ENCODE measurements at regions of chr2 and their contacts with region 1.

Region 1: DNA sequence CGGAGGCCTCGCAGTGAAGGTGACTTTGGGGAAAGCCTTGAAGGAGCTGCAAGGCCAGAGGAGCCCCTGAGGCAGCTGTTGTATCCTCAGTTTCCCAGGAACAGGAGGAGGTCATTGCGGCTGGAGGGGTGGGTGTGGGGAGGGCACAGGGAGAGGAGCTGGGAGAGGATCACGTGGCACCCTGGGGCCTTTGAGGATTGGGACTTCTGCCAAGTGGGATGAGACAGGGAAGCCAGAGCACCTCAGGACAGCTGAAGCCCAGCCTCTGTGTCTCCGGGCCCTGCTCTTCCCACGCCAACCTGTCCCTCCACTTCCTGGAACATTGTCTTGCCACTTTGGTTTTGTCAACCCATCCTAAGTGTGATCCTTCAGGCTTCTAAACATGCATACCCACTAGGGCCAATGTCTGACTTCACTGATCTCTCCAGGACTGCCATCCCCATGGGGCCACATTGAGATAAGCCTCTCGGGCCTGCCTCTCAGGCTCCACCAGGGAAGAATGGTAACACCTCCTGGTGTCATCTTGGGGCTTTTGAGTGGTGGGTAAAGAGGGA is 19.3 kb upstream of the RRM2 start:
- DNase-seq: no peak
- ATAC-seq: no peak
- H3K4me3 ChIP-seq: no peak overlapping the region
- H3K27ac ChIP-seq: no peak overlapping the region
- H3K4me1 ChIP-seq: no peaks in the 10 kb centered on the region
- H3K27me3 ChIP-seq: no peaks in the 10 kb centered on the region
- CTCF ChIP-seq: no peak

Region 2: GRCh38 chr2:9618410-9618809 is 484.8 kb before region 1 on chr2:
- CTCF ChIA-PET with region 1: no interaction called
- POLR2A ChIA-PET with region 1: interaction called, 11 read pairs
- in situ Hi-C with region 1: no loop called
- intact Hi-C with region 1: no loop called
- DNase-seq: no peak
- ATAC-seq: no peak
- H3K4me3 ChIP-seq: no peak overlapping the region
- H3K27ac ChIP-seq: peak overlapping the region; percentile 30; the same call in 1 of the 2 replicates
- H3K4me1 ChIP-seq: peaks cover 64% of the 10 kb centered on the region
- H3K27me3 ChIP-seq: no peaks in the 10 kb centered on the region
- CTCF ChIP-seq: no peak

Region 3: GRCh38 chr2:9690252-9690651 is 413.0 kb before region 1 on chr2:
- CTCF ChIA-PET with region 1: no interaction called
- POLR2A ChIA-PET with region 1: no interaction called
- in situ Hi-C with region 1: no loop called
- intact Hi-C with region 1: no loop called
- DNase-seq: no peak
- ATAC-seq: peak; percentile 28
- H3K4me3 ChIP-seq: no peak overlapping the region
- H3K27ac ChIP-seq: no peak overlapping the region
- H3K4me1 ChIP-seq: peaks cover 6% of the 10 kb centered on the region
- H3K27me3 ChIP-seq: no peaks in the 10 kb centered on the region
- CTCF ChIP-seq: no peak